B cell (primary cell): ENCODE measurements at regions of chr7 and their contacts with region 1.

Region 1: DNA sequence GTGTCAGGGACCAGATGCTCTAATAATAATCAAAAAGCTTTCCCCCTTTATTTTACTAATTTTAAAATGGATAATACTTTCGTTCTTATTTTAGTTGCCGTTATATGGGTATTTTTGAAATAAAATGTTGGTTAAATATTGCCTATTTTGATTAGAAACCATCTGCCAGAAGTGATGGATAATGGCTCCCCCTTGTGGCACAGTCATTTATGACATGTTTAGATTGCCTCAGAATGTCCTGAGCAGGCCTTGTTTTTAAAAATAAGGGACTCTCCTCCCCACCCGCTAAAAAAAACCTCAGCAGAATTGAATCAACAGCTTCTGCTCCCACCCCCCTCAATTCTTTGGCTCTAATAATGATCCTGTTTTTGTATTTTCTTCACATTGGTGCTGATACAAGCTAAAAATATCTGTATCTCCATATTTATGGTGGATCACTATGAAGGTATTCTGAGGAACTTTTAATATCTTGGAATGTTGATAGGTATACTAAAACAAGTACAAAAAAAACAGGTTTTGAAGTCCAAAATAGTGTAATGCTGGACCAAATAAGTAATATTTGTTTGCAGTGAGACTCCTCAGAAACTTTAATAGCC is 38.8 kb downstream of the TMEM60 start:
- DNase-seq: peak; percentile 82
- ATAC-seq: peak; percentile 71
- H3K4me3 ChIP-seq: no peak overlapping the region
- H3K4me3 Mint-ChIP-seq: no peak overlapping the region
- H3K27ac ChIP-seq: peak overlapping the region in 1 of 2 donors; percentile 59
- H3K27ac Mint-ChIP-seq: peak overlapping the region; percentile 1
- H3K4me1 ChIP-seq: peaks cover 17 to 21% of the 10 kb centered on the region in 2 donors
- H3K4me1 Mint-ChIP-seq: peaks cover 58% of the 10 kb centered on the region
- H3K27me3 ChIP-seq: no peaks in the 10 kb centered on the region
- H3K27me3 Mint-ChIP-seq: no peaks in the 10 kb centered on the region
- CTCF ChIP-seq: peak; percentile 95

Region 2: DNA sequence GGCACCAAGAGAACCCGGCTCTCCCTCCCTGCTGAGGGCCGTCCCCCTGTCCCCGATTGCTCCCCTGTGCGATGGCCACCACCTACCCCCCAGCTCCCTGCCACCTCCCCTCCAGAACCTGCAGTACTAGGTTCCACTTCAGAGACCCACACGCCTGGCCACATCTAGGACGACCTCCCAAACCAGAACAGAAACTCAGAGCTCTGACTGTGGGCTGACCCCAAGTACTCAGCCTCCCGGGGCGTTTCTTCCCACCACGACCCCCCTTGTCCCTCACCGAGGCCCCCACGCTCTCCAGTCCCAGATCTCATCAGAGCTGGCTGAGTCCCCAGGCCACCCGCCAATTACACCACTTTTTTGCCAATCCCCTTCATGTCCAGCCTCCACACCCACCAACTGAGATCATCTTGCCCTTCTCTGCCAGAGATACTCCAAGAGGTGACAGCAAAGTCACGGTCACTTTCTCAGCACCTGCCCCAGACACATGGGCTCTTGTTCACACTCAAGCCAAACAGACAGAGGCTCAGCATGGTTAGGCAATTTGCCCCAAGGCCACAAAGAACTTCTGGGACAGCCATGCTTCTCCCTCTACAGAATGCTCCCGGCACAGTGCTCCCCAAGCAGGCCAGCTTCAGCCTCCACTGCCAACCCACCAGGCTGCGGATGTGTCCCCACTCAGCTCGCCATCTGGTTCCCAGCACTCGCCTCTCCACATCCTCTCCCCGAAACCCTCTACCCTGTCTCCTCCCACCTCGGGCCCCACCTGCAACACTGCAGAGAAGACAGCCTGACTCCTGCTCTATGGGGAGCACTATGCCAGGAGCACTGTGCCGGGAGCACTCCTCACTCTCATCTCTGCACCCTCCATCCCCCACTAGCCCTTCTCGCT is 1769.6 kb before region 1 on chr7:
- CTCF ChIA-PET with region 1: no interaction called
- POLR2A ChIA-PET with region 1: no interaction called
- intact Hi-C with region 1: no loop called
- DNase-seq: no peak
- ATAC-seq: no peak
- H3K4me3 ChIP-seq: no peak overlapping the region
- H3K4me3 Mint-ChIP-seq: no peak overlapping the region
- H3K27ac ChIP-seq: no peak overlapping the region
- H3K27ac Mint-ChIP-seq: peak overlapping the region; percentile 42
- H3K4me1 ChIP-seq: peaks cover 5 to 23% of the 10 kb centered on the region in 2 donors
- H3K4me1 Mint-ChIP-seq: peaks cover 23% of the 10 kb centered on the region
- H3K27me3 ChIP-seq: no peaks in the 10 kb centered on the region
- H3K27me3 Mint-ChIP-seq: no peaks in the 10 kb centered on the region
- CTCF ChIP-seq: no peak

Region 3: GRCh38 chr7:77368974-77369373 is 390.4 kb before region 1 on chr7:
- CTCF ChIA-PET with region 1: no interaction called
- POLR2A ChIA-PET with region 1: no interaction called
- intact Hi-C with region 1: loop called (anchors 10 kb)
- DNase-seq: no peak
- ATAC-seq: peak; percentile 66
- H3K4me3 ChIP-seq: no peak overlapping the region
- H3K4me3 Mint-ChIP-seq: no peak overlapping the region
- H3K27ac ChIP-seq: no peak overlapping the region
- H3K27ac Mint-ChIP-seq: no peak overlapping the region
- H3K4me1 ChIP-seq: no peaks in the 10 kb centered on the region
- H3K4me1 Mint-ChIP-seq: peaks cover 9% of the 10 kb centered on the region
- H3K27me3 ChIP-seq: no peaks in the 10 kb centered on the region
- H3K27me3 Mint-ChIP-seq: no peaks in the 10 kb centered on the region
- CTCF ChIP-seq: peak; percentile 29

Region 4: DNA sequence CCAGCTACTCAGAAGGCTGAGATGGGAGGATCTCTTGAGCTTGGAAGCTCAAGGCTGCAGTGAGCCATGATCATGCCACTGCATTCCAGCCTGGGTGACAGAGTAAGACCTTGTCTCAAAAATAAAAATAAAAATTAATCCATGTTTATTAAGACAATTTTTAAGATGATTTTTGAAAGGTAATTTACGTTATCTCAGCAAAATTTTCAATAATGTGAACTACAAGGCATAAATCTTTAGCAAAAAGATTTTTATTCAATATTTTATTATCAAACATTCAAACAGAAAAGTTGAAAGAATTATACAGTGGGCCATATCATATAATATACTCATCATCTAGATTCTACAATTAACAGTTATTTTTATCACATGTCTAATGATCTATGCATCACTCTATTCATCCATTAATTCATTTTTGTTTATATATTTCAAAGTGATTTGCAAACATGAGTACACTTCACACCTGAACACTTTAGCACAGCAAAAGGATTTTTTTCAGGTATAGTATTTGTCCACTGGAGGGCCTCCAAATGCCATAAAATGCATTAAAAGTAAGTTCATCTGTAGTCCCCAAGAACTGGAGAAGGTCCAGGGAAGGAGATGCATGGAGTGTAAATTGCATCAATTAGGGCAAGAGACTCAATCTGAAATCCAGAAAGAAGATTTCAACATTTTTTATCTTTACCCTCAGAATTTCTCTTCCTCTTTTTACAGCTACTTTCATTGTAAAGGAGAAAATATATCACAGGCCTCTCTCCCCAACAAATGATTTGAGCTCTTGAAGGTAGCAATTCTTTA is 101.8 kb before region 1 on chr7:
- CTCF ChIA-PET with region 1: interaction called, 155 read pairs
- POLR2A ChIA-PET with region 1: no interaction called
- intact Hi-C with region 1: loop called (anchors 1 kb)
- DNase-seq: peak; percentile 54
- ATAC-seq: peak; percentile 39
- H3K4me3 ChIP-seq: no peak overlapping the region
- H3K4me3 Mint-ChIP-seq: no peak overlapping the region
- H3K27ac ChIP-seq: no peak overlapping the region
- H3K27ac Mint-ChIP-seq: no peak overlapping the region
- H3K4me1 ChIP-seq: no peaks in the 10 kb centered on the region
- H3K4me1 Mint-ChIP-seq: no peaks in the 10 kb centered on the region
- H3K27me3 ChIP-seq: no peaks in the 10 kb centered on the region
- H3K27me3 Mint-ChIP-seq: no peaks in the 10 kb centered on the region
- CTCF ChIP-seq: peak; percentile 63

Region 5: DNA sequence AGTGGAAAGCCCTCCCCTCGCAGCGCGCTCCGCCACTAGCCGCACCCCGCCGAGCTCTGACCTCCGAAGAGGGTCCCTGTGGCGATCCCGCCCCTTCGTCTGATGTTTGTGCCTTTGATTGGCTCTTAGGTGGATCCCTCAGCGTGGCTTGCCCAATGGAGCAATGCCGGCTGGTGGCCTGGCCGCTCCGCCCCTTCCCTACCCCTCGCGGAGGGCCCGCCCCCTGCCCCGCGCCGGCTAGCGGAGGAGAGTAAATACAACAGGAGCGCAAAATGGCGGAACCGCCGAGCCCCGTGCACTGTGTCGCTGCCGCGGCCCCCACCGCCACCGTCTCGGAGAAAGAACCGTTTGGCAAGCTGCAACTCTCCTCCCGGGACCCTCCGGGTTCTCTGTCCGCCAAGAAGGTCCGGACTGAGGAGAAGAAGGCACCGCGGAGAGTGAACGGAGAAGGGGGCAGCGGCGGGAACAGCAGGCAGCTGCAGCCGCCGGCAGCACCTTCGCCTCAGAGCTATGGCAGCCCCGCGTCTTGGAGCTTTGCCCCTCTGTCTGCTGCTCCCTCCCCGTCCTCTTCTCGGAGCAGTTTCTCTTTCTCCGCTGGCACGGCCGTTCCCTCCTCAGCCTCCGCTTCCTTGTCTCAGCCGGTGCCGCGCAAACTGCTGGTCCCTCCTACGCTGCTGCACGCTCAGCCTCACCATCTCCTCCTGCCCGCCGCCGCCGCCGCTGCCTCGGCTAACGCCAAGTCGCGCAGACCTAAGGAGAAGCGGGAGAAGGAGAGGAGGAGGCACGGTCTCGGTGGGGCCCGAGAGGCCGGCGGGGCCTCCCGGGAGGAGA is 63.0 kb before region 1 on chr7 and contains the start of gene RSBN1L:
- CTCF ChIA-PET with region 1: interaction called, 8 read pairs
- POLR2A ChIA-PET with region 1: interaction called, 4 read pairs
- intact Hi-C with region 1: loop called (anchors 2 kb)
- DNase-seq: peak; percentile 97
- ATAC-seq: peak; percentile 94
- H3K4me3 ChIP-seq: peak within 1 kb of the TSS; percentile 72 to 100 (median 84)
- H3K4me3 Mint-ChIP-seq: peak within 1 kb of the TSS; percentile 98
- H3K27ac ChIP-seq: peak within 1 kb of the TSS; percentile 89 to 90
- H3K27ac Mint-ChIP-seq: peak within 1 kb of the TSS; percentile 97
- H3K4me1 ChIP-seq: peaks cover 20 to 35% of the 10 kb centered on the region in 2 donors
- H3K4me1 Mint-ChIP-seq: peaks cover 54% of the 10 kb centered on the region
- H3K27me3 ChIP-seq: no peaks in the 10 kb centered on the region
- H3K27me3 Mint-ChIP-seq: no peaks in the 10 kb centered on the region
- CTCF ChIP-seq: peak; percentile 61
- total RNA-seq, gene RSBN1L: 47.0 and 55.0 TPM in 2 replicates

Region 6: DNA sequence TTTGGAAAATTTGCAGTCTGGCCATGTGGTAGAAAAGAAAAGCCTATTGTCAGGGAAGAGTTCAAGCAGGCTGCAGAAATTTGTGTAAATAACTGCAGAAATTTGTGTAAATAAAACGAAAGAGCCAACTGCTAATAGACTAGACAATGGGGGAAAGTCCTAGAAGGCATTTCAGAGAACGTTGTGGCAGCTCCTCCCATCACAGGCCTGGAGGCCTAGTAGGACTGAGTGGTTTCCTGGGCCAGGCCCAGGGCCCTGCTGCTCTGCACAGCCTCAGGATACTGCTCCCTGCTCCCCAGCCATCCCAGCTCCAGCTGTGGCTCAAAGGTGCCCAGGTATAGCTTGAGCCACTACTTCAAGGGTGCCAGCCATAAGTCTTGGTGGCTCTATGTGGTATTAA is 12.2 kb before region 1 on chr7:
- CTCF ChIA-PET with region 1: interaction called, 11 read pairs
- POLR2A ChIA-PET with region 1: no interaction called
- intact Hi-C with region 1: no loop called
- DNase-seq: no peak
- ATAC-seq: no peak
- H3K4me3 ChIP-seq: no peak overlapping the region
- H3K4me3 Mint-ChIP-seq: no peak overlapping the region
- H3K27ac ChIP-seq: no peak overlapping the region
- H3K27ac Mint-ChIP-seq: no peak overlapping the region
- H3K4me1 ChIP-seq: peaks cover 3 to 7% of the 10 kb centered on the region in 2 donors
- H3K4me1 Mint-ChIP-seq: peaks cover 18% of the 10 kb centered on the region
- H3K27me3 ChIP-seq: no peaks in the 10 kb centered on the region
- H3K27me3 Mint-ChIP-seq: no peaks in the 10 kb centered on the region
- CTCF ChIP-seq: no peak

Region 7: GRCh38 chr7:77903597-77903996 is 144.2 kb after region 1 on chr7:
- CTCF ChIA-PET with region 1: interaction called, 12 read pairs
- POLR2A ChIA-PET with region 1: no interaction called
- intact Hi-C with region 1: no loop called
- DNase-seq: peak; percentile 49
- ATAC-seq: no peak
- H3K4me3 ChIP-seq: no peak overlapping the region
- H3K4me3 Mint-ChIP-seq: no peak overlapping the region
- H3K27ac ChIP-seq: peak overlapping the region in 1 of 2 donors; percentile 77
- H3K27ac Mint-ChIP-seq: peak overlapping the region; percentile 66
- H3K4me1 ChIP-seq: peaks cover 17 to 34% of the 10 kb centered on the region in 2 donors
- H3K4me1 Mint-ChIP-seq: peaks cover 45% of the 10 kb centered on the region
- H3K27me3 ChIP-seq: no peaks in the 10 kb centered on the region
- H3K27me3 Mint-ChIP-seq: no peaks in the 10 kb centered on the region
- CTCF ChIP-seq: peak; percentile 25

Region 8: GRCh38 chr7:78039790-78040776 is 280.7 kb after region 1 on chr7:
- CTCF ChIA-PET with region 1: interaction called, 3 read pairs
- POLR2A ChIA-PET with region 1: no interaction called
- intact Hi-C with region 1: loop called (anchors 5 kb)
- DNase-seq: peak; percentile 58
- ATAC-seq: peak; percentile 57
- H3K4me3 ChIP-seq: no peak overlapping the region
- H3K4me3 Mint-ChIP-seq: no peak overlapping the region
- H3K27ac ChIP-seq: no peak overlapping the region
- H3K27ac Mint-ChIP-seq: no peak overlapping the region
- H3K4me1 ChIP-seq: no peaks in the 10 kb centered on the region
- H3K4me1 Mint-ChIP-seq: peaks cover 2% of the 10 kb centered on the region
- H3K27me3 ChIP-seq: peaks cover 0 to 11% (median 4%) of the 10 kb centered on the region in 4 experiments
- H3K27me3 Mint-ChIP-seq: peaks cover 25% of the 10 kb centered on the region
- CTCF ChIP-seq: peak; percentile 90